RWPE1 (cell line): ENCODE measurements at regions of chr11 and their contacts with region 1.

Region 1: DNA sequence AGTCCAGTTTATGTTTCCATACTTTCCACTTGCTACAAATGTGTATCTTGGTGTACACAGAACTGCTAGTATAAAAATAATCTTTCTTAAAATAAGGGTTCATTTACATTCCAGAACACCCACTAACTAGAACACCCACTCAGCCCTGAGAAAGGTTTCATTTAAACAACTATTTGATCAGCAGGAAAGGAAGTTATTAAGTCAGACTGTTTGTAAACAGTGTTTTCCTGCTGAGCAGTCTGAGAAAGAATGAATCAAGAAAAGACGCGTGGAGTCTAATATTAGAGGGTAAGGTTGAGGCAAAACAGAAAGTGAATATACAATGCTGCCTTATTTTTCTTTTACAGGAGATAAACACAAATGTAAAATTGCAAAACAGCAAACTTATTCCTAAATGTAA is 32.7 kb downstream of the NARS2 start:
- DNase-seq: no peak
- H3K27ac ChIP-seq: no peak overlapping the region
- CTCF ChIP-seq: no peak

Region 2: DNA sequence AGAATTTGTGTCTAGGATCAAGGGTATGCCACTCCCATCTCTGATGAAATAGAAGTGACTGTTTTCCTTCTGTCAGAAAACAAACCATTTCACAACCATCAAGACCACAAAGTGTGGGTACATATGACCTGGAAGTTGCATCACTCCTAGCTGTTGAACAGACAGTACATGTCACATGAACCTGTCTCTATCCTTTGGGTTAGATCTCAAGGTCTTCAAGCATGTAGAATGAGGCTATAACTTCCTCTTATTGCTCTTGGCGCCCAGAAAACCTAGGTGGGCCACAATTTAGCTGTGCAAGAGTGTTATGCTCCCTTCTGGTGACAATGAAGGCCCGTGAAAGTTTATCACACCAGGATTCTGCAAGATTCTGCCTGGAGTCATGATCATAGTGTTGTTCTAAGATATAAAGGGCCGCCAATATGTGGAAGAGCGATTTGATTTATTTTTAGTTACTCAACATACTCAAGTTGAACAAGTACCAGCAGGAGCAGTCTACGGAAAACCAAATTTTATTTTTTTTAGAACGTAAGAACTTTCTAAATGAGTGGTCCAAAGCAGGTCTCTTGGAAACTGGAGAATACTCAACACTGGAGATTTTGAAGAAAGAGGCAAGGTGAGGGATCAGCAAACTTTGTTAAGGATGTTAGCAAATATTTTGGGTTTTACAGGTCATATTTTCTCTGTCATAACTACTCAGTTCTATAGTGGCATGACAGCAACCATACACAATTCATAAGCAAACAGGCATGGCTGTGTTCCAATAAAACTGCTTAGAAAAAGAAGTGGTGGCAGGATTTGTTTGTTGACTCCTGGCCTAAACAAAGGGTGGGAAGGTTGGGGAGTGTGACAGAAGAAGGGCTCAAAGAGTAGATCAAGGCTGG is 251.5 kb before region 1 on chr11:
- CTCF ChIA-PET with region 1: no interaction called
- POLR2A ChIA-PET with region 1: no interaction called
- DNase-seq: peak; percentile 27
- H3K27ac ChIP-seq: no peak overlapping the region
- CTCF ChIP-seq: no peak

Region 3: GRCh38 chr11:78916759-78917158 is 374.8 kb after region 1 on chr11:
- CTCF ChIA-PET with region 1: interaction called, 10 read pairs
- POLR2A ChIA-PET with region 1: no interaction called
- DNase-seq: no peak
- H3K27ac ChIP-seq: no peak overlapping the region
- CTCF ChIP-seq: no peak